ENCODE measurements at regions of chr3 and their contacts with region 1.

Region 1: GRCh38 chr3:108406661-108407206 is 103.7 kb downstream of the MYH15 start:
- DNase-seq: no peak
- ATAC-seq: peak; percentile 87
- H3K4me3 Mint-ChIP-seq: peak overlapping the region; percentile 35
- H3K27ac Mint-ChIP-seq: peak overlapping the region; percentile 87
- H3K4me1 Mint-ChIP-seq: peaks cover 28% of the 10 kb centered on the region
- H3K27me3 Mint-ChIP-seq: no peaks in the 10 kb centered on the region
- CTCF ChIP-seq: no peak

Region 2: GRCh38 chr3:107429320-107430181 is 977.2 kb before region 1 on chr3:
- CTCF ChIA-PET with region 1: no interaction called
- POLR2A ChIA-PET with region 1: no interaction called
- intact Hi-C with region 1: loop called (anchors 10 kb)
- DNase-seq: peak; percentile 59
- ATAC-seq: peak; percentile 56
- H3K4me3 Mint-ChIP-seq: peak overlapping the region; percentile 89
- H3K27ac Mint-ChIP-seq: peak overlapping the region; percentile 77
- H3K4me1 Mint-ChIP-seq: peaks cover 58% of the 10 kb centered on the region
- H3K27me3 Mint-ChIP-seq: no peaks in the 10 kb centered on the region
- CTCF ChIP-seq: peak; percentile 83

Region 3: GRCh38 chr3:107753480-107753879 is 653.3 kb before region 1 on chr3:
- CTCF ChIA-PET with region 1: no interaction called
- POLR2A ChIA-PET with region 1: no interaction called
- intact Hi-C with region 1: loop called (anchors 5 kb)
- DNase-seq: no peak
- ATAC-seq: no peak
- H3K4me3 Mint-ChIP-seq: no peak overlapping the region
- H3K27ac Mint-ChIP-seq: no peak overlapping the region
- H3K4me1 Mint-ChIP-seq: no peaks in the 10 kb centered on the region
- H3K27me3 Mint-ChIP-seq: no peaks in the 10 kb centered on the region
- CTCF ChIP-seq: no peak

Region 4: GRCh38 chr3:107938143-107938542 is 468.6 kb before region 1 on chr3:
- CTCF ChIA-PET with region 1: interaction called, 18 read pairs
- POLR2A ChIA-PET with region 1: no interaction called
- intact Hi-C with region 1: loop called (anchors 1 kb)
- DNase-seq: no peak
- ATAC-seq: no peak
- H3K4me3 Mint-ChIP-seq: no peak overlapping the region
- H3K27ac Mint-ChIP-seq: no peak overlapping the region
- H3K4me1 Mint-ChIP-seq: no peaks in the 10 kb centered on the region
- H3K27me3 Mint-ChIP-seq: peaks cover 3% of the 10 kb centered on the region
- CTCF ChIP-seq: no peak

Region 5: GRCh38 chr3:108062051-108062450 is 344.7 kb before region 1 on chr3:
- CTCF ChIA-PET with region 1: no interaction called
- POLR2A ChIA-PET with region 1: no interaction called
- intact Hi-C with region 1: loop called (anchors 2 kb)
- DNase-seq: no peak
- ATAC-seq: peak; percentile 93
- H3K4me3 Mint-ChIP-seq: peak overlapping the region; percentile 11
- H3K27ac Mint-ChIP-seq: peak overlapping the region; percentile 66
- H3K4me1 Mint-ChIP-seq: peaks cover 81% of the 10 kb centered on the region
- H3K27me3 Mint-ChIP-seq: no peaks in the 10 kb centered on the region
- CTCF ChIP-seq: no peak

Region 6: DNA sequence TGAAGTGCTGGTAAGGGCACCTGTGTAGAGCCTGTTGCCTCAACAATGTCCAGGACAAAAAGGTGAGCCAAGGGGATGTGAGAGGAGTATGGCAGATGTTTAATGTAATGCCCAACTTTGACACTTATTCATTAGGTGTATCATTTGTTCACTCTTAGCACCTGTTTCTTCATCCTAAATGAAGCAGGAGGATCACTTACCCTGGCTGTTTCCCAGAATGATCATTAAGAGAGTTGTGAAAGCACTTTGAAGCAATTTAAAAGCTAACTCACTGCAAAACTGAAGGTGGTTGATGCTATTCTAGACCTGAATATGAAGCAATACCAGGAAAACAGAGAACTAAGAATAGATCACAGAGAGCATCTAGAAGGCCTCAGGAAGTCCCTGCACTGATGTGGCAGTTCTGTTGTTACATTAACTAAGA is 113.8 kb before region 1 on chr3:
- CTCF ChIA-PET with region 1: no interaction called
- POLR2A ChIA-PET with region 1: no interaction called
- intact Hi-C with region 1: loop called (anchors 1 kb)
- DNase-seq: no peak
- ATAC-seq: peak; percentile 32
- H3K4me3 Mint-ChIP-seq: peak overlapping the region; percentile 19
- H3K27ac Mint-ChIP-seq: peak overlapping the region; percentile 41
- H3K4me1 Mint-ChIP-seq: peaks cover 51% of the 10 kb centered on the region
- H3K27me3 Mint-ChIP-seq: no peaks in the 10 kb centered on the region
- CTCF ChIP-seq: no peak

Region 7: GRCh38 chr3:108420926-108421325 is 14.2 kb after region 1 on chr3:
- CTCF ChIA-PET with region 1: no interaction called
- POLR2A ChIA-PET with region 1: no interaction called
- intact Hi-C with region 1: no loop called
- DNase-seq: no peak
- ATAC-seq: no peak
- H3K4me3 Mint-ChIP-seq: no peak overlapping the region
- H3K27ac Mint-ChIP-seq: no peak overlapping the region
- H3K4me1 Mint-ChIP-seq: no peaks in the 10 kb centered on the region
- H3K27me3 Mint-ChIP-seq: no peaks in the 10 kb centered on the region
- CTCF ChIP-seq: no peak

Region 8: GRCh38 chr3:108744762-108745161 is 338.0 kb after region 1 on chr3:
- CTCF ChIA-PET with region 1: no interaction called
- POLR2A ChIA-PET with region 1: no interaction called
- intact Hi-C with region 1: no loop called
- DNase-seq: no peak
- ATAC-seq: no peak
- H3K4me3 Mint-ChIP-seq: no peak overlapping the region
- H3K27ac Mint-ChIP-seq: no peak overlapping the region
- H3K4me1 Mint-ChIP-seq: no peaks in the 10 kb centered on the region
- H3K27me3 Mint-ChIP-seq: peaks cover 7% of the 10 kb centered on the region
- CTCF ChIP-seq: no peak

Measured in activated B cell treated with CpG ODN at 0.5 μM for 24 hours (primary cell).